Activated B cell treated with CpG ODN at 0.5 μM for 24 hours (primary cell): ENCODE measurements at regions of chr1 and their contacts with region 1.

Region 1: DNA sequence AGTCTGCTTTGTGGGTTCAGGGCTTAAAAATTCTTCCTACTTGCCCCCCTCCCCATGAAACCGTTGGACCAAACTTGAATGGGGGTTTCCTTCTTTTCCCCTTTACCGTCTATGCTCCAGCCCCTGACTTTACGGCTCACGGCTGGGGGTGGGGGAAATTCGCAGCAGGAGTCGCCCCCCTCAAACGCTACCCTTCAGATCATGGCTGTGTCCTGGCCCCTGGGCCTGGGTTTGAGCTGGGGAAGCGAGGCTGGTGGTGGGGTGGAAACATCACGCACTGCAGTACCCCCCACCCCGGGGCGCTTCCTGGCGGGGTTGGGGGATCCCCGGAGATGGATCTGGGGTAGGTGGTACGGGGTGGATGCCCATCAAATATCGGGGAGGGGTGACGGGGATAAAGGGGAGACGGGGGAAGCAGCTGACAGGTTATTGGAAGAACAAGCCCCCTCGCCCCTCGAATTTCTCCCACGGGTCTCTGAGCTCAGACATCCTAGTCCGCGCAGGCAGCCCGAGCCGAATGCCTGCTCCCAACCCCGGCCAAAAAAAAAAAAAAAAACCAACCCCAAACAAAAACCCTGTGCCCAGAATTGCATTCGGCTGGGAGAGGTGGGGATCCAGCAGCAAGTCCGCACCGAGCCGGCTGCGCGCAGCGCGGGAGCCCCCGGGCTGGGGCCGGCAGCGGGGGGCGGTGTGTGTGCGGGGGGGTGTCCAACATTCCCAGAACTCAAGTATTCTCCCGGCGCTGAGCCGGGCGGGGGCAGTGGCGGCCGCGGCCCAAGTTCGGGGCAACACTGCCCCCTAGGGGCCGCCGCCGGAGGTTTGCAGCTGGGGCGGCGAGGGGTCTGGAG is 59.0 kb upstream of the ACOT11 start:
- DNase-seq: peak; percentile 82
- ATAC-seq: peak; percentile 70
- H3K4me3 Mint-ChIP-seq: peak overlapping the region; percentile 89
- H3K27ac Mint-ChIP-seq: peak overlapping the region; percentile 70
- H3K4me1 Mint-ChIP-seq: peaks cover 26% of the 10 kb centered on the region
- H3K27me3 Mint-ChIP-seq: peaks cover 12% of the 10 kb centered on the region
- CTCF ChIP-seq: no peak

Region 2: GRCh38 chr1:53878492-53879105 is 610.4 kb before region 1 on chr1:
- CTCF ChIA-PET with region 1: interaction called, 4 read pairs
- POLR2A ChIA-PET with region 1: no interaction called
- intact Hi-C with region 1: loop called (anchors 1 kb)
- DNase-seq: no peak
- ATAC-seq: no peak
- H3K4me3 Mint-ChIP-seq: no peak overlapping the region
- H3K27ac Mint-ChIP-seq: no peak overlapping the region
- H3K4me1 Mint-ChIP-seq: no peaks in the 10 kb centered on the region
- H3K27me3 Mint-ChIP-seq: no peaks in the 10 kb centered on the region
- CTCF ChIP-seq: peak; percentile 56

Region 3: DNA sequence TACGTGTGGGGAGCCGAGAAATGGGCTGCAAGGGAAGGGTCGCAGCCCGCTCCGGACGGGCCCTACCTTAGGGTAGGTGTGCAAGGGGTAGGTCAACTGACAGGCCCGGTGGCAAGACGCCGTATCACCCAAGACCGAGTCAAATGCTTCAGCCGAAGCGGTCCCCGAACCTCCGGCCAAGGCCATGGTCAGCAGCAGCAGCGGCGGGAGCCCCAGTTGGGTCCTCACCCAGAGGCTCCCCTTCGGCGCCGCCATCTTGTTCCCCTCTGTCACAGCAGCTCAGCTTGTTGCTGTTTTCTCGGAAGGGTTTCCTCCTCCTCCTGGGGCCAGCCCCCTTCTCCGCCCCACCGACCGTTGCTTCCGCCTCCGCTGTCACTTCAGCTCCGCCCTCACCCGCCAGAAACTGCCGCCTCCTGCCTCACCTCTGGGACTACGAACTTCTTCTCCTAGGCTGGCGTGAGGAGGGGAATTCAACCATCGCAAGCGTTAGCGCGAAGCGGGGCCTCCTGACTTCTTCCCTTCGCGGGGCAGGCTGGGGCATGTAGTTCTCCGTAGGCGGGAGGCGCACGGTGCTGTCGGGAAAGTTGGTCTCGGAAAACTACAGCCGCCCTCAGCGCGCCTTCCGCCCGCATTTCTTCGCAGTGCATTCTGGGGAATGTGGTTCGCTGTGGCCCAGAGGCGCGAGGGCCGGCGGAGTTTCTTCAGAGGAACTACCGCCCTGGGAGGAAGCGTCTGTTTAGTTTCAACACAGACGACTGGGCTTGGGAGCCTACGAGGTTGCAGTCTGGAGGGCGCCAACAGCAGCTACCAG is 435.9 kb before region 1 on chr1 and contains the starts of genes TCEANC2 and TMEM59:
- CTCF ChIA-PET with region 1: interaction called, 12 read pairs
- POLR2A ChIA-PET with region 1: no interaction called
- intact Hi-C with region 1: loop called (anchors 1 kb)
- DNase-seq: peak; percentile 92
- ATAC-seq: peak; percentile 92
- H3K4me3 Mint-ChIP-seq: no peak within 1 kb of the TSS
- H3K27ac Mint-ChIP-seq: no peak within 1 kb of the TSS
- H3K4me1 Mint-ChIP-seq: peaks cover 38% of the 10 kb centered on the region
- H3K27me3 Mint-ChIP-seq: no peaks in the 10 kb centered on the region
- CTCF ChIP-seq: no peak
- total RNA-seq, gene TCEANC2: 7.3 and 8.1 TPM in 2 replicates
- total RNA-seq, gene TMEM59: 103 and 123 TPM in 2 replicates

Region 4: GRCh38 chr1:54121482-54122134 is 367.4 kb before region 1 on chr1:
- CTCF ChIA-PET with region 1: interaction called, 5 read pairs
- POLR2A ChIA-PET with region 1: no interaction called
- intact Hi-C with region 1: loop called (anchors 1 kb)
- DNase-seq: peak; percentile 37
- ATAC-seq: peak; percentile 42
- H3K4me3 Mint-ChIP-seq: no peak overlapping the region
- H3K27ac Mint-ChIP-seq: no peak overlapping the region
- H3K4me1 Mint-ChIP-seq: peaks cover 5% of the 10 kb centered on the region
- H3K27me3 Mint-ChIP-seq: peaks cover 5% of the 10 kb centered on the region
- CTCF ChIP-seq: no peak

Region 5: GRCh38 chr1:54199765-54200518 is 289.1 kb before region 1 on chr1 and contains the starts of genes CYB5RL and MRPL37:
- CTCF ChIA-PET with region 1: interaction called, 4 read pairs
- POLR2A ChIA-PET with region 1: interaction called, 15 read pairs
- intact Hi-C with region 1: loop called (anchors 1 kb)
- DNase-seq: peak; percentile 74
- ATAC-seq: peak; percentile 99
- H3K4me3 Mint-ChIP-seq: peak within 1 kb of the TSS; percentile 92
- H3K27ac Mint-ChIP-seq: peak within 1 kb of the TSS; percentile 81
- H3K4me1 Mint-ChIP-seq: peaks cover 32% of the 10 kb centered on the region
- H3K27me3 Mint-ChIP-seq: no peaks in the 10 kb centered on the region
- CTCF ChIP-seq: no peak
- total RNA-seq, gene CYB5RL: 8.4 and 8.7 TPM in 2 replicates
- total RNA-seq, gene MRPL37: 62.5 and 64.1 TPM in 2 replicates

Region 6: DNA sequence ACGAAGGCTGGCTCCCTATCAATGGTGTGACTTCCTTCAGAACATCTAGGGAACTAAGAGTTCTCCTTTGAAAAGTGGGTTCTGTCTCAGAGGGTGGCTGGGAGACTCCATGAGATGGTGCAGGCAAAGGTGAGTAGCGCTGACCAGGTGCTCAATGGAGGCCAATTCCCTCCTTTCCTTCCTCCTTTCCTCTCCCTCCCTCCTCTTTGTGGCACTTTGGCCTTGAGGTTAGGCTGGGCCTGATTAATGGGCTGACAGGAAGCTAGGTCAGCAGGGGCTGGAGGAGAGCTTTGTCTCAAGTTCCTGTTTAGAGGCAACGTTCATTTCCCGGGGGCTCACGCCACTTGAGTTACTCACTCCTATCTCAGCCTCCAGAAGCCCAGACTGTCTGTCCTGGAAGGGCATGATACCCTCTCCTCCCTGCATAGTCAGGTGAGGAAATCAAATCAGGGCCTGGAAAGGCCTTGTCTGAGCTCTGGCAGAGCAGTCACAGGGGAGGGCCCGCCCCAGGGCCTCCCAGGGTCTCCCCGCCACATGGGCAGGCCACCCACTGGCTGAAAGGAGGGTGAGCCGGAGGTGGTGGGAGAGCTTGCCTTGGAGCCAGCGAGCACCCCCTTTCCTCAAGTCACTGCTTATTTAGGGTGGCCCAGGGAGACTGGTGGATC is 24.4 kb before region 1 on chr1:
- CTCF ChIA-PET with region 1: no interaction called
- POLR2A ChIA-PET with region 1: no interaction called
- intact Hi-C with region 1: no loop called
- DNase-seq: peak; percentile 7
- ATAC-seq: no peak
- H3K4me3 Mint-ChIP-seq: no peak overlapping the region
- H3K27ac Mint-ChIP-seq: no peak overlapping the region
- H3K4me1 Mint-ChIP-seq: no peaks in the 10 kb centered on the region
- H3K27me3 Mint-ChIP-seq: peaks cover 3% of the 10 kb centered on the region
- CTCF ChIP-seq: no peak

Region 7: DNA sequence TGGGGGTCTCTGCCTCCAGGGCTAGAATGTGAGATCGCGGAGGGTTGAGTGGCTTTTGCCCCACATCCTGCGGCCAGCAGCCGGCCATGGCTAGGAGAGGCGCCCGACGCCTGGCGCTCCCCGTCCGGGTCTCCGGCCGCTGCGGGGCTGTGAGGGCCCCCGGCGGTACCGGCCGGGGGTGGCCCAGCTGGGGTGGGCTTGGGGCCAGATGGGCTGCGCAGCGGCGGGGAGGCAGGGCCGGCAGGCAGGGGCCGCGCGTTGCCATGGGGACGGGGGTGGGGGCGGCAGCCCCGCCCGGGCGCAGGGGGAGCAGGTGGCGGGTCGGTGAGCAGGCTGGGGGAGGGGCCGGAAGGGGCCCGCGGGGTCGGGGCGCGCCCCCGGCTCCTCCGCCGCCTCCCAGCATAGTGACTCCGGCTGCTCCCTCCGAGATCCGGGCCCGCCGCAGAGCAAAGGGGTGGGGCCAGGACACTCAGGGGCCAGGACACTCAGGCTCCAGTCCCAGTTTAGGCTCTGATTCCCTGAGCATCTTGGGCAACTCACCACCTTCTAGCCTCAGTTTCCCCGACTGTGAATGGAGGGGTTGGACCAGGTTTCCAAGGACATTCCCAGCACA is 14.3 kb before region 1 on chr1:
- CTCF ChIA-PET with region 1: interaction called, 10 read pairs
- POLR2A ChIA-PET with region 1: interaction called, 4 read pairs
- intact Hi-C with region 1: loop called (anchors 1 kb)
- DNase-seq: no peak
- ATAC-seq: peak; percentile 61
- H3K4me3 Mint-ChIP-seq: peak overlapping the region; percentile 81
- H3K27ac Mint-ChIP-seq: peak overlapping the region; percentile 61
- H3K4me1 Mint-ChIP-seq: peaks cover 38% of the 10 kb centered on the region
- H3K27me3 Mint-ChIP-seq: peaks cover 12% of the 10 kb centered on the region
- CTCF ChIP-seq: no peak

Region 8: GRCh38 chr1:54810100-54810942 is 321.3 kb after region 1 on chr1:
- CTCF ChIA-PET with region 1: interaction called, 3 read pairs
- POLR2A ChIA-PET with region 1: no interaction called
- intact Hi-C with region 1: loop called (anchors 2 kb)
- DNase-seq: peak; percentile 51
- ATAC-seq: peak; percentile 90
- H3K4me3 Mint-ChIP-seq: no peak overlapping the region
- H3K27ac Mint-ChIP-seq: no peak overlapping the region
- H3K4me1 Mint-ChIP-seq: no peaks in the 10 kb centered on the region
- H3K27me3 Mint-ChIP-seq: peaks cover 2% of the 10 kb centered on the region
- CTCF ChIP-seq: no peak